ENCODE measurements at regions of chr10 and their contacts with region 1.

Region 1: GRCh38 chr10:26334932-26335573 is 103.1 kb upstream of the APBB1IP start:
- DNase-seq: peak; percentile 60
- ATAC-seq: peak; percentile 76; the same call in 1 of the 2 replicates
- H3K4me3 ChIP-seq: peak overlapping the region in 1 of 2 experiments; percentile 29; a peak in 2 of 4 replicates
- H3K27ac ChIP-seq: no peak overlapping the region
- H3K4me1 ChIP-seq: no peaks in the 10 kb centered on the region
- H3K27me3 ChIP-seq: no peaks in the 10 kb centered on the region
- CTCF ChIP-seq: peak; percentile 70

Region 2: DNA sequence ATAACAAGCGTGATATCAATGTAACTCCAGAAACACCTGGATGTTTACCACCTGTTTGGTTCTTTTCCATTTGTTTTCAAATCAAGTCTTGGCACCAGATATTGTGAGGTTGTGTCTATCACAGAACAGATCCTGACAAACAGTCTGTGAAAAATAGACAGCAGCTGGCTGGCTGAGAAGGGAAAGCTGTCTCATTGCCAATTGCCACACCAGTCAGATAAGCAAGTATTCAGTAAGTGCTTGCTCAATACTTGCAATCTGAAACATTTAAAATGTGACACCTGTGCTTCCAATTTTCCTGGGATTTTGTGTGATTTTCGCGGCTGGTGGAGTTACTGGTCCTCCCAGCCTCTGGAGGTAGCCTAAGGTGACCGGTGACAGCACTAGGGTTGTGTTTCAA is 548.9 kb before region 1 on chr10:
- CTCF ChIA-PET with region 1: no interaction called
- POLR2A ChIA-PET with region 1: no interaction called
- in situ Hi-C with region 1: no loop called
- intact Hi-C with region 1: no loop called
- DNase-seq: no peak
- ATAC-seq: no peak
- H3K4me3 ChIP-seq: no peak overlapping the region
- H3K27ac ChIP-seq: no peak overlapping the region
- H3K4me1 ChIP-seq: no peaks in the 10 kb centered on the region
- H3K27me3 ChIP-seq: no peaks in the 10 kb centered on the region
- CTCF ChIP-seq: no peak

Region 3: GRCh38 chr10:26556748-26557640 is 221.9 kb after region 1 on chr10:
- CTCF ChIA-PET with region 1: interaction called, 3 read pairs
- POLR2A ChIA-PET with region 1: no interaction called
- in situ Hi-C with region 1: no loop called
- intact Hi-C with region 1: loop called (anchors 1 kb)
- DNase-seq: peak; percentile 51
- ATAC-seq: 0 out of 2 replicates have a peak, but pooled peaks have one; percentile 62
- H3K4me3 ChIP-seq: no peak overlapping the region
- H3K27ac ChIP-seq: no peak overlapping the region
- H3K4me1 ChIP-seq: no peaks in the 10 kb centered on the region; the same call in 1 of the 2 replicates
- H3K27me3 ChIP-seq: no peaks in the 10 kb centered on the region
- CTCF ChIP-seq: peak; percentile 82

Measured in Panc1 (cell line).